Panc1 (cell line): ENCODE measurements at regions of chr1 and their contacts with region 1.

Region 1: GRCh38 chr1:119675349-119676345 is 27.6 kb upstream of the ZNF697 start:
- DNase-seq: peak; percentile 73
- ATAC-seq: peak; percentile 89
- H3K4me3 ChIP-seq: peak overlapping the region; percentile 28 to 46
- H3K27ac ChIP-seq: no peak overlapping the region
- H3K4me1 ChIP-seq: peaks cover 4% of the 10 kb centered on the region
- H3K27me3 ChIP-seq: peaks cover 3% of the 10 kb centered on the region; the same call in 1 of the 2 replicates
- CTCF ChIP-seq: peak; percentile 85

Region 2: DNA sequence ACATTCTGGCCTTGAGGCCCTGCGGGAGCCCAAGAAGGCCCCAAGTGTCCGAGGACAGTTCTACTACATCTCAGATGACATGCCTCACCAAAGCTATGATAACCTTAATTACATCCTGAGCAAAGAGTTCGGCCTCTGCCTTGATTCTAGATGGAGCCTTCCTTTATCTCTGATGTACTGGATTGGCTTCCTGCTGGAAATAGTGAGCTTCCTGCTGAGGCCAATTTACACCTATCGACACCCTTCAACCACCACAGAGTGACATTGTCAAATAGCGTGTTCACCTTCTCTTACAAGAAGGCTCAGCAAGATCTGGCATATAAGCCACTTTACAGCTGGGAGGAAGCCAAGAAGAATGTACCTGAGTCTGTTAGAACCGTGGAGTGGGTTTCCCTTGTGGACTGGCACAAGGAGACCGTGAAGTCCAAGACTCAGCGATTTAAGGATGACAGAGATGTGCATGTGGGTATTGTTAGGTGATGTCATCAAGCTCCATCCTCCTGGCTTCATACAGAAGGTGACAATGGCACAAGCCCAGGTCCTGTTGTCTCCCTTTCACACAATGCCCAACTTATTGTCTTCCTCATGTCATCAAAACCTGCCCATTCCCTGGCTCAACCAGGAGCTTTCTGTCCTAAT is 66.7 kb before region 1 on chr1:
- CTCF ChIA-PET with region 1: interaction called, 13 read pairs
- POLR2A ChIA-PET with region 1: no interaction called
- in situ Hi-C with region 1: no loop called
- intact Hi-C with region 1: loop called (anchors 1 kb)
- DNase-seq: no peak
- ATAC-seq: no peak
- H3K4me3 ChIP-seq: no peak overlapping the region
- H3K27ac ChIP-seq: no peak overlapping the region
- H3K4me1 ChIP-seq: no peaks in the 10 kb centered on the region
- H3K27me3 ChIP-seq: no peaks in the 10 kb centered on the region; the same call in 1 of the 2 replicates
- CTCF ChIP-seq: no peak

Region 3: GRCh38 chr1:119647734-119648619 is 27.7 kb before region 1 on chr1 and contains the start of gene ZNF697:
- CTCF ChIA-PET with region 1: interaction called, 14 read pairs
- POLR2A ChIA-PET with region 1: no interaction called
- in situ Hi-C with region 1: no loop called
- intact Hi-C with region 1: no loop called
- DNase-seq: peak; percentile 86
- ATAC-seq: peak; percentile 97
- H3K4me3 ChIP-seq: peak within 1 kb of the TSS; percentile 88 to 93
- H3K27ac ChIP-seq: peak within 1 kb of the TSS; percentile 82
- H3K4me1 ChIP-seq: peaks cover 13% of the 10 kb centered on the region
- H3K27me3 ChIP-seq: peaks cover 29% of the 10 kb centered on the region
- CTCF ChIP-seq: peak; percentile 67
- total RNA-seq, gene ZNF697: 7.1 TPM